HEK293 (cell line): ENCODE measurements at regions of chr19 and their contacts with region 1.

Region 1: GRCh38 chr19:17282488-17283255 is 971 bp downstream of the ANKLE1 start:
- H3K4me3 ChIP-seq: no peak overlapping the region
- H3K27ac ChIP-seq: no peak overlapping the region
- H3K4me1 ChIP-seq: no peaks in the 10 kb centered on the region
- CTCF ChIP-seq: peak; percentile 99

Region 2: DNA sequence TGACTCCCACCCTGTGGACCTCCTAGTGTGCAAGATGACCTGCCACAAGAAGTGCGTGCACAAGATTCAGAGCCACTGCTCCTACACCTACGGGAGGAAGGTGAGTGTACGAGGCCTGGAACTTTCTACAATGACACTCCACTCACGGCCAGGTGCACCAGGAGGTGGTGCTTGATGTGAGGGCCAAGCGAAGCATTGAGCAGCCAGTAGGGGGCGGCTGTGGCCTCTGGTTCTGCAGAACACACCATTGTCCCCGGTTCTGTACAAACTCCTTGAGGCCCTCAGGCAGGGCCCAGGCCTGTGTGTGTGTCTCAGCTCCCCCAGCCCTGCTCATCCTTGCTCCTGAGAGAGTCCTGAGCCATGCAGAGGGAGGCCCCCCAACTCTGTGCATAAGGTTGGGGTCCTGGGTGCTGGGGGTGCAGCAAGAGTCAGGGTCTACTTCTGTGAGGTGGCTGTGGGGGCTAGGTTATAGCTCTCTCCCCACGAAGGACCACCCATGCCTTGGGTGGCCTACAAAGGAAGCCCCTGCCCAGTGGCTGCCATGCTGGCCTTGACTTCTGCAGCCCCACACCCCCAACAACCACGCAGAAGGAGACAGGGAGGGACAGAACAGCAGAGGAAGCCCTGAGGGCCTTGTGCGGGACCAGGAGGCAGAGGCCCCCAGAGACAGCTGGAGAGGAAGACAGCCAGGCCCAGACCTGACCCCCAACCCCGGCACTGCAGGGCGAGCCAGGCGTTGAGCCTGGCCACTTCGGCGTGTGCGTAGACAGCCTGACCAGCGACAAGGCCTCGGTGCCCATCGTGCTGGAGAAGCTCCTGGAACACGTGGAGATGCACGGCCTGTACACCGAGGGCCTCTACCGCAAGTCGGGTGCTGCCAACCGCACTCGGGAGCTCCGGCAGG is 77.2 kb before region 1 on chr19:
- CTCF ChIA-PET with region 1: interaction called, 14 read pairs
- POLR2A ChIA-PET with region 1: interaction called, 3 read pairs
- H3K4me3 ChIP-seq: no peak overlapping the region
- H3K27ac ChIP-seq: no peak overlapping the region
- H3K4me1 ChIP-seq: no peaks in the 10 kb centered on the region
- CTCF ChIP-seq: peak; percentile 62